ENCODE measurements at regions of chr5 and their contacts with region 1.

Region 1: GRCh38 chr5:72307968-72308852 is 11.8 kb downstream of the MRPS27 start:
- DNase-seq: peak; percentile 97 to 98 (median 98)
- ATAC-seq: peak; percentile 98
- H3K4me3 ChIP-seq: peak overlapping the region; percentile 8 to 90
- H3K27ac ChIP-seq: peak overlapping the region; percentile 86 to 98 (median 94)
- H3K4me1 ChIP-seq: peaks cover 14% of the 10 kb centered on the region
- H3K27me3 ChIP-seq: no peaks in the 10 kb centered on the region
- CTCF ChIP-seq: peak; percentile 78 to 98 (median 94)
- POLR2A ChIP-seq: peak; percentile 94 to 97 (median 97)

Region 2: DNA sequence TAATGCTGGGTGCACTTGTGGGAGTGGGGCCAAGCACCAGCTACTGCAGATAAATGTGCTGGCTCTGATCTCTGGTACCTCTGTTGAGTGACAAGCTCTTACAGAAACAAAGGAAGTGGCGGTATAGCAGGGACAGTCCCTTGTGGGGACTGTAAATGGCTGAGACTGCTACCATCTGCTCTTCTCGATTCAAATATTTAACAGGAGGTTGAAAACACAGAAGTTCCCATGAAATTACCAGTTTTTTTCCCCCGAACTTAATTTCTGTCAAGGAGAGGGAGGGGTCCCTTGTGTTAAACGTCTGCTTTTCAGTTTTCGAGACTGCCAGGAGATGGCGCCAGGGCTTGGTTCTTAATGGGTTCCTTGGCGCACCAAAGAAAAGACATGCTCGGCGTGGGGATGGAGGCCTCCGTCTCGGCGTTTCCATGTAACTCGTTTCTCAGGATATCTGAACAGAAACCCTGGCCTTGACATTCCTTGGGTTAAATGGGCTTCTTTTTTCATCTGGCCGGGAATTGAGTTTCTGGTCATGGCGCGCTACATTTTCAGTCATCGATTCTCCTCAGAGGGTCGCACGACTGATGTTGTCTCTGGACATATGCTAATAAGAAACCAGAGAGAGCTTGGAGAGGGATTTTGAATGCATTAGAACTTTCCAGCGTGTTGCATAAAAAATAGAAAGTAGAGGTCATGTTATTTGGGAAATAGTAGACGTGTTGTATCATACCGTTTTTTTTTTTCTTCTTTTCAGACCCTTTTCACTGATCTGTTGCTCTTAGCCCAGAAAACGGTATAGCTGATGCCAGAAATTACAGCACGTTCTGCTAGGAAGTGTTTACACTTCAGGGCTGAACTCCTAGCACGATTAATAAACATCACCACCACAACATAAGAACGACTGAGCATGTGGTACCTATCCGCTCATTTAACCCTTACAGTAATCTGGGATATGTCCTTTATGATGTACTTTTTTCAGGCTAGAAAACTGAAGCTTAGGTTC is 525.1 kb before region 1 on chr5:
- intact Hi-C with region 1: loop called (anchors 10 kb)
- DNase-seq: peak; percentile 69 to 79 (median 72)
- ATAC-seq: peak; percentile 71
- H3K4me3 ChIP-seq: no peak overlapping the region
- H3K27ac ChIP-seq: no peak overlapping the region
- H3K4me1 ChIP-seq: no peaks in the 10 kb centered on the region
- H3K27me3 ChIP-seq: no peaks in the 10 kb centered on the region
- CTCF ChIP-seq: peak; percentile 53 to 73 (median 69)
- POLR2A ChIP-seq: no peak

Region 3: DNA sequence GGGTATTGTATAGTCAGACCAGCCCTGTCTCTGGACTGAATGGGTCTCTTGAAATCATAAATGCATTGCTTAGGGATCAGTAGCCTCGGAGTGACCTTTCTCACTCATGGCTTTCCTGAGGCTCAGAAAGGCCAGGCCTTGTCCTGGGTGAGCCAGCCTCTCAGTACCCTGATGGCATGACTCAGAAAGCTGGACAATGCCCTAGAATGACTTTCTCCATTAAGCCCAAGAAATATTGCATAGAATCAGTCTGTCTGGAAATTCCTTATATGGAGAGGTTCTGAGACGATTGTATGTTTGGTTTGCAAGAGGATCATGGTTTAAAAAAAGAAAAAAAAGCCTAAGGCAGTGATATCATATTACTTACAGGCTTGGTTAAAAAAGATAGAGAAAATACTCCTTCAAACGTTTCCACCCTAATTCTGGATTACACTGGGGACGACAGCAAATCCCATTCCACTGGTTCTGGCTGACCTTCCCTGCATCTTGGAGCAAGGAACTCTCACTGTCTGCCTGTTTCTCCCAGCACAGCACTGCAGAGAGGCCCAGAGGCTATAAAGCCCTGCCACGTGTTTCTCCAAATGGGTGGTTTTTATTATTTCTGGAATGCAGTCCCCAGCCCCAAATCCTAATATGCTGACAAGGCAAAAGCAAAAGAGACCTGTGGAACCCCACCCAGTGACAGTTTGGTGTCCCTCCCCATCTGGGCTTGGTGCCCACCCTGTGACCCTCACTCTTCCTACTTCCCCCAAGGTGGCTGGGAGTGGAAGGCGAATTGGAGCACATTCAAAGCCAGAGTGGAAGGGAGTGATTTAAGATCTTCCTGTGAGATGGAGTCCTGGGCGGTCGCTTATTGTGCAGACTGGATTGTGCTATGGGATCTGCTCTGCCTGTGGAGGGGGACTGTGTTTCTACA is 166.5 kb before region 1 on chr5:
- intact Hi-C with region 1: loop called (anchors 10 kb)
- DNase-seq: peak in 1 of 4 donors; percentile 23
- ATAC-seq: peak; percentile 38
- H3K4me3 ChIP-seq: no peak overlapping the region
- H3K27ac ChIP-seq: no peak overlapping the region
- H3K4me1 ChIP-seq: peaks cover 8% of the 10 kb centered on the region
- H3K27me3 ChIP-seq: no peaks in the 10 kb centered on the region
- CTCF ChIP-seq: no peak
- POLR2A ChIP-seq: no peak

Region 4: GRCh38 chr5:72510610-72511181 is 202.5 kb after region 1 on chr5:
- intact Hi-C with region 1: no loop called
- DNase-seq: peak in 1 of 4 donors; percentile 14
- ATAC-seq: peak; percentile 45
- H3K4me3 ChIP-seq: no peak overlapping the region
- H3K27ac ChIP-seq: no peak overlapping the region
- H3K4me1 ChIP-seq: no peaks in the 10 kb centered on the region
- H3K27me3 ChIP-seq: no peaks in the 10 kb centered on the region
- CTCF ChIP-seq: no peak
- POLR2A ChIP-seq: no peak

Measured in body of pancreas (tissue), 4 donors.